ENCODE measurements at regions of chr2 and their contacts with region 1.

Region 1: DNA sequence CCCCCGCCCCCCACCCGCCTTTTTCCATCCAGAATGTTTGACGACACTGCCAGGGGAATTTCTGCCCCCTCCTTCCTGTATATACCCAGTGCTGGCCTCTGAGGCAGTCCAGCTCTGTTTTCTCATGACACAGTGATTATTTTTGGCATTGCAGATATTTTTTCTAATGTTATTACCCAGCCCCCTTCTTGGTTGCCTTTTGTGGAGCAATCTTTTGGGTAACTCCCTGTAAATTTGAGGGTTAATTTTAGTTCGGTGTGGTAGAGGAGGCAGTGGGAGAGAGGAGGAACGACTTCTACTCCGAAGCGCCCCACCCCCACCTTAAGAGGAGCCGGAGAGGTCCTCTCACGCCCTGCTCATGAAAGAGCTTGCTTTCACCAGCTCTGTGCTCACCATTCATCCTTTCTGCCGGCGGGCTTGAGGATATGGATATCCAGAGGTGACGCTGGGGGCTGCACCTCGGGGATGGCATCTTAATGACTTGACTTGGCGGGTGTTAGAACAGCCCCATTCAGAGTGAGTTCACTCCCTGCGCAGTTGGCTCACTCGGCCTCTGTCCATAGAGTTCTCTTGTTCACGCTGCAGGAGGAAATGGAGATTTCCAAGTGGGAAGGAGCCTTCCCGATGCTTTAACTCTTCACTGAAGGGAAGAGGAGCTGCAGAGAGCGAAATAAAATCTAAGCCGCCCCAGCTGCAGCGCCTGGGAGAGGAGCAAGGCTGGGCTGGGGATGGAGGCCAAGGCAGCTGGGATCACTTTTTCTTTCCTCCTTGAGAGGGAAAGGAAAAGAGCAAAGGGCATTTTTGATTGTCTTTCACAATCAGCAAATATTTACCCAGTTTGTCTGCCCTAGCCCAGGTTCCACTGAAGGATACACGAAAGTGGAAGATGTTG is 38.4 kb downstream of the EPAS1 start:
- DNase-seq: peak; percentile 51
- ATAC-seq: peak; percentile 12; the same call in 1 of the 2 replicates
- H3K4me3 ChIP-seq: no peak overlapping the region
- H3K27ac ChIP-seq: peak overlapping the region; percentile 65
- H3K4me1 ChIP-seq: peaks cover 27% of the 10 kb centered on the region
- H3K27me3 ChIP-seq: no peaks in the 10 kb centered on the region
- CTCF ChIP-seq: no peak

Region 2: DNA sequence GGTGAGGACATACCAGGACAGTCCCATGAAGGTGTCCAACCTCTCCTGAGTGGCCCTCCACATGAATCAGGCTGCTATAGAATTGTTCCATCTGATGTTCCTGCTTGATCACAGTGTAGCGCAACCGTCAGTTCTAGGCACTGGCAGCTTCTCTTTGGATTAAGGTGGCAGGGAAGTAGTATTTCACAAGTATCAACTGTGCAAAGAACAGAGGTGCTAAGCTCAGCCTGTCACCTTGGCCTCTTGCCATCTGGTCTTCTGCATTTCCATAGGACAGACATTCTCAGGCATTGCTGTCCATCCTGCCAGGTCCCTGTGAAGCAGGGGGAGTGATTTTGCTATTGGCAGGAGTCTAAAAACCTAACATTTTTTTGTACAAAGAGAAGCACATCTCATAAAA is 220.6 kb before region 1 on chr2:
- CTCF ChIA-PET with region 1: no interaction called
- POLR2A ChIA-PET with region 1: no interaction called
- intact Hi-C with region 1: no loop called
- DNase-seq: no peak
- ATAC-seq: no peak
- H3K4me3 ChIP-seq: no peak overlapping the region
- H3K27ac ChIP-seq: no peak overlapping the region
- H3K4me1 ChIP-seq: peaks cover 22% of the 10 kb centered on the region
- H3K27me3 ChIP-seq: no peaks in the 10 kb centered on the region
- CTCF ChIP-seq: no peak

Region 3: DNA sequence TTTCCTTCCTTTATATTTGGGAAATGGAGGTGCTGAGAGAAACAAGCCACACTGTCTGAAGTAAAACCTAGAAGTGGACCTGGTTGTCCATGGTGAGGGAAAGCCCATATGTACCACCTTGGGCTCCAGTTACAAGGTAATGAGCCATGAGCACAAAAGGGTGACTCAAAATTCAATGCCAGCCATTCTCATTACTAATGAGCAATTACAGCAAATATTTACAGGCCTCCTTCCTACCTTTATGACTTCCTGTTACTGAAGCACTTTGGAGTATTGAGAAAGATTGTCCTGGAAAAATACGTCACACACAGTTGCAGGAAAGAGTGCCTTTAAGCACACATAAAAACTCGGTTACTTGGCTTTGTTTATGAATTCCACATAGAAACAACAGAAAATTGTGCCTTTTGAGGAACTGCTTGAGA is 29.3 kb before region 1 on chr2:
- CTCF ChIA-PET with region 1: no interaction called
- POLR2A ChIA-PET with region 1: interaction called, 30 read pairs
- intact Hi-C with region 1: no loop called
- DNase-seq: peak; percentile 95
- ATAC-seq: peak; percentile 62
- H3K4me3 ChIP-seq: peak overlapping the region; percentile 41; the same call in 1 of the 2 replicates
- H3K27ac ChIP-seq: peak overlapping the region; percentile 93
- H3K4me1 ChIP-seq: peaks cover 78% of the 10 kb centered on the region
- H3K27me3 ChIP-seq: no peaks in the 10 kb centered on the region
- CTCF ChIP-seq: no peak

Region 4: DNA sequence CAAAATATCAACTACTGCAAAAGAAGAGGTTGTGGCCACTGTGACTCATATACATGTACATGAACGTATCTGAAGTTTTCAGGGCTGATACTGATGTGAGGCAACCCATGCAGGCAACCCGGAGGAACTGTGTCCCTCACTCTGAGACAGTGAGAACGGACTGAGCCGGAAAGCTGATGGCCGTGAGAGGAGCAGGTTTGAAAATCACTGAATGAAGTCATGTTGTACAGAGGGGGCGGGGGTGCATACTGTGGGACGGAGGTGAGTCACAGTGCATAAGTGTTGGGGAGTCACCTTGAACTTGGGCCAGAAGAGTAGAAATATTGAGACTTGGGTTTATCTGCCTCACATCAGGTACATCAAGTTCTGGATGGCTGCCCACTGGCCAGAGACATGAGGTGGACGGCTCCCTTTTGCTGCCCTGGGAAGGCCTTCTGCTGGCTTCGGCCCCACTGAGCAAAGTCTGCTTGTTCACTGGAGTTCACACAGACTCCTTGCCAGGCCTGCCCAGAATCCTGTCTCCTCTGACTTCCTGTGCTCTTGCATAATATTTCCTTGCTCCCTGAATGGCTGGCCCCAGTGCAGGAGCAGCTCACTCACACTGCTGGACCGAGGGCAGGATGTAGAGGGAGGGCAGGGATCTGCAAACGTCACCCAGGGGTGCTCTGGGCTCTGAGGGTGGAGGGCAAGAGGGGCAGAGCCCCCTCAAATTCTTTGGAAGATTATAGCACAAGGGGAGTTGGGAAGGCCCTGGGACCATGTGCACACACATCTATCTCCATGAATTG is 20.3 kb before region 1 on chr2:
- CTCF ChIA-PET with region 1: no interaction called
- POLR2A ChIA-PET with region 1: no interaction called
- intact Hi-C with region 1: loop called (anchors 2 kb)
- DNase-seq: peak; percentile 97
- ATAC-seq: peak; percentile 77
- H3K4me3 ChIP-seq: peak overlapping the region; percentile 10; the same call in 1 of the 2 replicates
- H3K27ac ChIP-seq: peak overlapping the region; percentile 92
- H3K4me1 ChIP-seq: peaks cover 72% of the 10 kb centered on the region
- H3K27me3 ChIP-seq: no peaks in the 10 kb centered on the region
- CTCF ChIP-seq: no peak

Measured in PC-3 (cell line).